ENCODE measurements at regions of chr12 and their contacts with region 1.

Region 1: GRCh38 chr12:21865846-21866245 is 75.4 kb downstream of the ABCC9 start:
- DNase-seq: no peak
- H3K4me3 ChIP-seq: no peak overlapping the region
- H3K27ac ChIP-seq: no peak overlapping the region
- H3K27me3 ChIP-seq: no peaks in the 10 kb centered on the region
- CTCF ChIP-seq: no peak

Region 2: GRCh38 chr12:20917269-20917668 is 948.6 kb before region 1 on chr12:
- intact Hi-C with region 1: loop called in 1 of 2 experiments (anchors 5 kb)
- DNase-seq: no peak
- H3K4me3 ChIP-seq: no peak overlapping the region
- H3K27ac ChIP-seq: no peak overlapping the region
- H3K27me3 ChIP-seq: no peaks in the 10 kb centered on the region
- CTCF ChIP-seq: no peak

Measured in dorsolateral prefrontal cortex (tissue), 120 donors.